MCF 10A (cell line): ENCODE measurements at regions of chr16 and their contacts with region 1.

Region 1: GRCh38 chr16:89314357-89314756 is 96.9 kb downstream of the ZNF778 start:
- DNase-seq: no peak
- H3K4me3 Mint-ChIP-seq: no peak overlapping the region
- H3K27ac Mint-ChIP-seq: peak overlapping the region; percentile 69
- H3K4me1 Mint-ChIP-seq: peaks cover 63% of the 10 kb centered on the region
- H3K27me3 Mint-ChIP-seq: no peaks in the 10 kb centered on the region
- CTCF ChIP-seq: no peak

Region 2: DNA sequence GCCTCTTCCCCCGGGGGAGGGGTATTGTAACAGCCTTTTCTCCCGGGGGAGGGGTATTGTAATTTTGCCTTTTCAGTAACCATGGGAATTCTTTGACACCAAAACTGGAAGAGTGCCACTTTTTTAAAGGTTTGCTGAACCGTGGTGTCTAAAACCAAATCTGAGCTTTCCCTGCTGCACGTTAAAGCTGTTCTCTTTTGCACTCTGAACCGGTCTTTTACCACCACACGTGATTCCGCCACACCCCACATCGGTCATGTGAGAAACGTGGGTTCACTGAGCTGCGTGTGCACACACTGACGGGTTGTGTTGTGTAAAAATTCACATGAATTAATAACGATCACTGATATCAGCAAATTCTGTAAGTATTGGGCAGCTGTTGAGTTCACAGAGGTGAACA is 229.9 kb before region 1 on chr16:
- CTCF ChIA-PET with region 1: no interaction called
- POLR2A ChIA-PET with region 1: no interaction called
- intact Hi-C with region 1: no loop called
- DNase-seq: no peak
- H3K4me3 Mint-ChIP-seq: no peak overlapping the region
- H3K27ac Mint-ChIP-seq: no peak overlapping the region
- H3K4me1 Mint-ChIP-seq: no peaks in the 10 kb centered on the region
- H3K27me3 Mint-ChIP-seq: peaks cover 47% of the 10 kb centered on the region
- CTCF ChIP-seq: no peak

Region 3: GRCh38 chr16:89300311-89300975 is 13.9 kb before region 1 on chr16:
- CTCF ChIA-PET with region 1: interaction called, 3 read pairs
- POLR2A ChIA-PET with region 1: interaction called, 19 read pairs
- intact Hi-C with region 1: no loop called
- DNase-seq: peak; percentile 62
- H3K4me3 Mint-ChIP-seq: no peak overlapping the region
- H3K27ac Mint-ChIP-seq: peak overlapping the region; percentile 85
- H3K4me1 Mint-ChIP-seq: peaks cover 14% of the 10 kb centered on the region
- H3K27me3 Mint-ChIP-seq: no peaks in the 10 kb centered on the region
- CTCF ChIP-seq: no peak

Region 4: GRCh38 chr16:89325861-89326471 is 11.6 kb after region 1 on chr16:
- CTCF ChIA-PET with region 1: interaction called, 3 read pairs
- POLR2A ChIA-PET with region 1: interaction called, 27 read pairs
- intact Hi-C with region 1: no loop called
- DNase-seq: peak; percentile 68
- H3K4me3 Mint-ChIP-seq: peak overlapping the region; percentile 65
- H3K27ac Mint-ChIP-seq: peak overlapping the region; percentile 68
- H3K4me1 Mint-ChIP-seq: peaks cover 57% of the 10 kb centered on the region
- H3K27me3 Mint-ChIP-seq: no peaks in the 10 kb centered on the region
- CTCF ChIP-seq: no peak